Aorta (tissue), 5 donors: ENCODE measurements at regions of chrX and their contacts with region 1.

Region 1: GRCh38 chrX:50905334-50905733 is 5.2 kb upstream of the BMP15 start:
- DNase-seq: no peak
- ATAC-seq: no peak
- H3K4me3 ChIP-seq: no peak overlapping the region
- H3K27ac ChIP-seq: no peak overlapping the region
- H3K4me1 ChIP-seq: no peaks in the 10 kb centered on the region
- H3K27me3 ChIP-seq: no peaks in the 10 kb centered on the region

Region 2: DNA sequence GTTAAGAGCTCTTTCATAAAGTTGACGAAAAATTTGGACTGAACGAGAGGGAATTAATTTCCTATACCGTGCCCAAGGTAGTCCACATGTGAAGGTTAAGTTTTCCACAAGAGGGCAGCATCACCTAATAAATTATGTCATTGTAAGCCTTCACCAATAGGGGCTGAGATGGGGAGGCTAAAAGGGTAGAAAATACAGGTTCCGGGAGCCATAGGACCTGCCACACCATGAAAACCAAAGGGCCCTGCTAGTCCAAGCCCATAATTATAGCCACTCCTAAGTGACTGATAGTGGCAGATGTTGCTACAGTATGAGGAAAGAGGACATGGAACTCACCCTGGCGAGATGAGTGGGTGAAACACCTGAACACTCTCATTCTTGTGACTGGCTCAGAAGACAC is 213.5 kb before region 1 on chrX:
- intact Hi-C with region 1: loop called in 1 of 2 experiments (anchors 5 kb)
- DNase-seq: no peak
- ATAC-seq: no peak
- H3K4me3 ChIP-seq: no peak overlapping the region
- H3K27ac ChIP-seq: no peak overlapping the region
- H3K4me1 ChIP-seq: no peaks in the 10 kb centered on the region
- H3K27me3 ChIP-seq: no peaks in the 10 kb centered on the region

Region 3: DNA sequence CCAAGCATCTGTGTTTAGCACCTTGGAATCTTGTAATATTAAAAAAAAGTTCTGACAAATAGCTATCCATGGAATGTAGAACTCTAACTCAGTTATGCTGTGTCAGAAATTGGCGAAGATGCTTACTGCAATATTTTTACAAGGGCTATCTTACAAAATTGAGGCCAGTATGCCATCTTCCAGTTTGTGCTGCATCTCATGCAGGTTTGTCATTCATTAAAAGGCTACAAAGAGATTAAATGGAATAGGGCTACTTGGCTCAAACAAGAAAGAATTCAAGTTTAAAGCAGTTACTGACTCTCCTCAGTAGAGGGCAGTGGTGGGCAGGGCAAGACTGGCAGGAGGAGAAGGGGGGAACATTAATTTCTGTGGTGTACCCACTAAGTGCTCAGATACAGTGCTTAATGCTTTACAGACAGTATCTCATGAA is 157.8 kb before region 1 on chrX:
- intact Hi-C with region 1: loop called in 1 of 2 experiments (anchors 5 kb)
- DNase-seq: no peak
- ATAC-seq: no peak
- H3K4me3 ChIP-seq: no peak overlapping the region
- H3K27ac ChIP-seq: no peak overlapping the region
- H3K4me1 ChIP-seq: no peaks in the 10 kb centered on the region
- H3K27me3 ChIP-seq: no peaks in the 10 kb centered on the region